ENCODE measurements at regions of chr3 and their contacts with region 1.

Region 1: GRCh38 chr3:4493014-4493940 is at the start of gene ITPR1:
- DNase-seq: peak; percentile 98 to 99
- ATAC-seq: peak; percentile 97 to 100 (median 99)
- H3K4me3 ChIP-seq: peak within 1 kb of the TSS; percentile 68 to 93 (median 80)
- H3K27ac ChIP-seq: peak within 1 kb of the TSS; percentile 52 to 89 (median 87)
- H3K4me1 ChIP-seq: peaks cover 0 to 50% (median 44%) of the 10 kb centered on the region in 9 donors
- H3K27me3 ChIP-seq: no peaks in the 10 kb centered on the region
- CTCF ChIP-seq: peak in 1 of 9 donors; percentile 13
- total RNA-seq, gene ITPR1: 15.0 to 40.3 (median 19.1) TPM

Region 2: DNA sequence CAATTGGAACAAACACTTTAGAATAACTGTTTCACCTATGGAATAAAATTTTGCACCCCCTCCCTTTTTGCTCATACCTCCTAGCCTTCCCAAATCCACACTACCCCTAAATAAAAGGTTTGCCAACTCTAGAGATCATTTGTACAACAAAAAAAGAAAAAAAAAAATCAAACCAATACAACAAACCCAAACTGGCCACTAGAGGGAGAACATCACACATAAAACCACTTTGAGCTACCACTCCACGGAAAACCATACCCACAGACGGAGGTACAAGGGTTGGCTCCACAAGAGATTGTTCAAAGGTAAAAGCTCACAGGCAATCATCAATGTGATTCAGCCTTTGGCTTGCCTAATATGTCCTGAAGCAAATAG is 142.5 kb before region 1 on chr3:
- intact Hi-C with region 1: loop called in 4 of 10 experiments (anchors 2 to 10 kb)
- DNase-seq: peak in 1 of 2 donors; percentile 66
- ATAC-seq: peak; percentile 71 to 92 (median 86)
- H3K4me3 ChIP-seq: peak overlapping the region in 9 of 10 donors; percentile 1 to 47 (median 43)
- H3K27ac ChIP-seq: peak overlapping the region in 8 of 10 donors; percentile 19 to 73 (median 54)
- H3K4me1 ChIP-seq: peaks cover 0 to 22% (median 9%) of the 10 kb centered on the region in 9 donors
- H3K27me3 ChIP-seq: no peaks in the 10 kb centered on the region
- CTCF ChIP-seq: peak; percentile 70 to 87 (median 77)

Region 3: DNA sequence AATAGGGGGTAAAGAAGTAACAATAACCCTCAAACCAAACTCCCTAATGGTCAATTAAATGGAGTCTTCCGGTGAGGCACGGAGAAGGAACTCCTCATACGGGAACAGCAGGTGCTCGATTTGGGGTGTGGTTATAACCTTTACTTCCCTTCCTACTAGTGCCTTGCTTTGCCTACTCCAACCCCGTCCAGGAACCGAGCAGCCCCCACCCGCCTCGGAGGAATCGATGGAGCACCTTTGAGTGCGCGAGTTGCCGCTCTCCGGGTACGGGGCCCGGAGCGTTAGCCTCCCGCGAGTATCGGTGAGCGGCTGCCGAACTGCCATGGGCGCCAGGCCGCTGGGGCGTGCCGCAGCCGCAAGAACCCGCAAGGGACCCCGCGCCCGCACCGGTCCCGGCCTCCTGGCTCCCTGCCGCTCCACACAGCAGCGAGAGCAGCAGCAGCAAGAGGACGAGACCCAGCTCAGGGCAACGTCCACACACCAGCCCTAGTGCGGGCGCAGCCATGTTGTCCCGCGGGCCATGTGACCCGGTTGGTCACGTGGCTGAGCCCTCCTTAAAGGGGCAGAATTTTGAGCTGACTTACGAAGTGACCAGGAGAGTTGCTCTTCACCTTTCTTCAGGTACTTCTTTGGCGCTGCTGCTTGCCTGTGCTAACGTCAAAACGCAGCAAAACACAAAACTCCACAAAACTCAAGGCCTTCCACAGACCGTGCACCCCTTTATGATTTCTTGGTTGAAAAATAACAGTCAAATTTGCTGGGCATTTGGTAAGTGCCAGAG is 26.3 kb before region 1 on chr3 and contains the start of gene SUMF1:
- intact Hi-C with region 1: loop called in 1 of 10 experiments (anchors 2 kb)
- DNase-seq: peak; percentile 77 to 79
- ATAC-seq: peak; percentile 98 to 99 (median 98)
- H3K4me3 ChIP-seq: peak within 1 kb of the TSS; percentile 76 to 100 (median 93)
- H3K27ac ChIP-seq: peak within 1 kb of the TSS; percentile 11 to 97 (median 80)
- H3K4me1 ChIP-seq: peaks cover 0 to 23% (median 15%) of the 10 kb centered on the region in 9 donors
- H3K27me3 ChIP-seq: no peaks in the 10 kb centered on the region
- CTCF ChIP-seq: peak in 1 of 9 donors; percentile 4
- total RNA-seq, gene SUMF1: 6.9 to 15.1 (median 8.9) TPM

Region 4: GRCh38 chr3:4533489-4534443 is 40.5 kb after region 1 on chr3:
- intact Hi-C with region 1: loop called in 1 of 10 experiments (anchors 5 kb)
- DNase-seq: peak; percentile 30 to 32
- ATAC-seq: peak in 5 of 8 donors; percentile 15 to 64 (median 39)
- H3K4me3 ChIP-seq: peak overlapping the region in 1 of 10 donors; percentile 0
- H3K27ac ChIP-seq: peak overlapping the region in 9 of 10 donors; percentile 5 to 64 (median 50)
- H3K4me1 ChIP-seq: peaks cover 0 to 71% (median 54%) of the 10 kb centered on the region in 9 donors
- H3K27me3 ChIP-seq: no peaks in the 10 kb centered on the region
- CTCF ChIP-seq: no peak

Region 5: GRCh38 chr3:4633078-4634004 is 140.1 kb after region 1 on chr3:
- intact Hi-C with region 1: loop called in 7 of 10 experiments (anchors 2 to 10 kb)
- DNase-seq: peak in 1 of 2 donors; percentile 24
- ATAC-seq: peak in 6 of 8 donors; percentile 42 to 88 (median 76)
- H3K4me3 ChIP-seq: no peak overlapping the region
- H3K27ac ChIP-seq: peak overlapping the region in 1 of 10 donors; percentile 1
- H3K4me1 ChIP-seq: peaks cover 0 to 8% (median 0%) of the 10 kb centered on the region in 9 donors
- H3K27me3 ChIP-seq: no peaks in the 10 kb centered on the region
- CTCF ChIP-seq: peak; percentile 81 to 93 (median 88)

Region 6: DNA sequence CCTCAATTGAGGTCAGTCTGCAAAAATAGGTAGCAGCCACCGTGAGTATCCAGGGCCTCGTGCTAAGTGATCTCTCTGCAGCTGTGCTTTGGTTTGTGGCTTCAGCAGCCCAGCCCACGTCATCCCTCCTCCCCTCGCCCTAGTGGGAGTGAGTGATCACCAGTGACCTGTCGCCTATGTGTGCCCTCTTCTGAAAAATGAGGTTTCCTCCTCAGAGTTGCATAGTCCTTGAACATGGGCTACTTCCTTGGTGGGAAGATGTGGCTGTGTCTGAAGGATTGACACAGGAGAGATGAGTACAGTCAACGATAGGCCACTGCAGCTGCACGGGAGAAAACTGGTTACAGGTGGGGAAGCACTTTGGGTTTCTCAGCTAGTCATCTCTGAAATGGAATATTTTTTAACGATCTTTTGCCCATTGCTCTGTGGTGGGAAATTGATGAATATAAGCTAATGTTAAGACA is 341.2 kb after region 1 on chr3:
- intact Hi-C with region 1: no loop called
- DNase-seq: no peak
- ATAC-seq: no peak
- H3K4me3 ChIP-seq: no peak overlapping the region
- H3K27ac ChIP-seq: peak overlapping the region in 1 of 10 donors; percentile 45
- H3K4me1 ChIP-seq: peaks cover 0 to 55% (median 11%) of the 10 kb centered on the region in 9 donors
- H3K27me3 ChIP-seq: no peaks in the 10 kb centered on the region
- CTCF ChIP-seq: no peak

Measured in heart right ventricle (tissue), 16 donors.